Mammary epithelial cell (primary cell): ENCODE measurements at regions of chr2 and their contacts with region 1.

Region 1: GRCh38 chr2:112993831-112994230 is 11.4 kb upstream of the IL36A start:
- DNase-seq: no peak
- H3K4me3 ChIP-seq: no peak overlapping the region
- H3K27ac ChIP-seq: no peak overlapping the region
- H3K4me1 ChIP-seq: no peaks in the 10 kb centered on the region
- H3K27me3 ChIP-seq: no peaks in the 10 kb centered on the region
- CTCF ChIP-seq: no peak

Region 2: DNA sequence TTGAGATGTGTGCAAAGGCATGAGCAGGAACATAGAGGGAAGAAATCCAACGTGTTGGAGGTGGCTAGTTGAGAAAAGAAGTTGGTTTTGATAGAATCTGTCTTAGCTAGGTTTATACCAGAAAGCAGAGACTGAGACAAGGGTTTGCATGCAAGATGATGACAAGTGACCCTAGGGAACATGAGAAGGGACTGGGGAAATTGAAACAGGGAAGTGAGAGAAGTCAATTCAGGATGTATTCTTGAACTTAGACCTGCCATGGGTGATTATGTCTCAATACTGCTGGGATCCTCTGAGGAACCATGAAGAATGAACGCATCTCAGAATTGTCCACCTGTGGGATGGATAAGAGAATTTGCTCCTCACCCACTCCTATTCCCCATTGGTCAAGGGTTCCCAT is 31.9 kb after region 1 on chr2:
- CTCF ChIA-PET with region 1: no interaction called
- dilution Hi-C with region 1: no loop called
- in situ Hi-C with region 1: no loop called
- intact Hi-C with region 1: loop called (anchors 5 kb)
- DNase-seq: no peak
- H3K4me3 ChIP-seq: no peak overlapping the region
- H3K27ac ChIP-seq: no peak overlapping the region
- H3K4me1 ChIP-seq: no peaks in the 10 kb centered on the region
- H3K27me3 ChIP-seq: peaks cover 8% of the 10 kb centered on the region
- CTCF ChIP-seq: no peak

Region 3: DNA sequence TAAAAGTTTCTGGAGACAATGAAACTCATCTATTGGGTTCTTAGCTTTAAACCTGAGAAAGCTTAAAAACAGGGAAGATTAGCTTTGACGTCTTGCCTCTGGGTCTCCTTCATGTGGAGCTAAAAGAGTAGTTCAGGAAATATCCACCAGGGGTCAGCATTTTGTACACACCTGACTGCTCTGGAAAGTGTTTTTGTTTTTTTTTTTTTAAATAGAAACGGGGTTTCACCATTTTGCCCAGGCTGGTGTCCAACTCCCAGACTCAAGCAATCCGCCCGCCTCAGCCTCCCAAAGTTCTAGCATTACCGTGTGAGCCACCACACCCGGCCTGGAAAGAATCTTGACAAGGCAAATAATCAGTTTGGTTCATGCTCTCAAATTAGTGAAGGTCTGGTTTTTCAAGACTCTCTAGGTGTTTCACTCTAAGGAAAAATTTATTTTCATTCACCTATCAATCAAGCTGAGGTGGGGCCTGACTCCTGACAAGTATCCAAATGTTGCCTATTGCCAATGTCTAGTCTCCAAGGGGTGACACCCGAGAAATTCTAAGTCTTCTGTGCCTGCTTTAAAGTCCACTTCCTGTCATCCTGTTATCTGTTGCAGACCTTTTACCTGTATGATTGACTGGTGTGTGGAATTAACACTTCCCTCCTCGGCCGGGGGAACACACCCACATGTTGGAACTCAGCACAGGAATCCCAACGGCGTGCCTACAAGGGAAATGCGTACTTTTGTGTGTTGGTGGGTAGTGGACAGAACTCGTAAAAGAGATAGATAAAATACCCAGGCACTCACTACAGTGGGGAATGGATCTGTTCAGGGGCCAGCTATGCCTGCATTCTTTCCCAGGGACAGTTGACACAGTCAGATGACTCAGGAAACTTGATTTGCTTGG is 144.8 kb after region 1 on chr2:
- CTCF ChIA-PET with region 1: no interaction called
- dilution Hi-C with region 1: no loop called
- in situ Hi-C with region 1: no loop called
- intact Hi-C with region 1: no loop called
- DNase-seq: peak; percentile 66
- H3K4me3 ChIP-seq: no peak overlapping the region
- H3K27ac ChIP-seq: no peak overlapping the region
- H3K4me1 ChIP-seq: peaks cover 9% of the 10 kb centered on the region
- H3K27me3 ChIP-seq: no peaks in the 10 kb centered on the region
- CTCF ChIP-seq: peak; percentile 61 to 70